Left cardiac atrium (tissue), 4 donors: ENCODE measurements at regions of chr1 and their contacts with region 1.

Region 1: DNA sequence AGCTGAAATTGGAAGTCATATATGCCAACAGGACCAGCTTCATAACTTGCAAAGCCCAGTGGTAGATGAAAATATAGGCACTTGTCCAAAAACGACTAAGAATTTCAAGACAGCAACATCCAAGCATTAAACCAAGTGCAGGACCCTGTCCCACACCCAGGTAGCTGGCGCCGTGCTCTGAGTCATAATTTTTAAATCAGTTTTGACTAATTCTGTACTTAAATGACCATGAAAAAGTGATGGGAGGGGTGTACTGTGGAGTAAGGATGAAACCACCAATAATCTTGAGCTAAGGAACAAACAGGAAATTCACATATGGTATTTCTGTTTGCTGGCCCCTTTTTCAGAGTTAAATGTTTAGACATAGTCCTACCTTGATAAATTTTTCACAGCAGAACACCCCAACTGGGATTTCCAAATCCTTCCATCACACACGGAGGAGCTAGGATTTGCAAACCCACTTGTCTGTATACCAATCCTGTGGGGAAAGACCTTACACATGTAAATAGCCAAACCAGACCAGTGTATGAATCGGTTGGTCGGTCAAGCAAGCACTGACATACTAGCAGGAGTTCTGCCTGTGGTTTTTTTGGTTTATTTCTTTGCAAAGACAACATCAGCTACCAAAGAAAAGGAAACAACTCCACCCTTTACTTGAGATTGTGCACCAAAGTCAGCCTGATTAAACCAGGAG is 235.7 kb upstream of the RAB4A start:
- DNase-seq: no peak
- ATAC-seq: no peak

Region 2: GRCh38 chr1:229148041-229148671 is 113.0 kb after region 1 on chr1:
- intact Hi-C with region 1: loop called in 1 of 2 experiments (anchors 10 kb)
- DNase-seq: peak; percentile 55
- ATAC-seq: peak; percentile 83 to 90

Region 3: GRCh38 chr1:229158341-229158921 is 123.2 kb after region 1 on chr1:
- intact Hi-C with region 1: no loop called
- DNase-seq: peak; percentile 36
- ATAC-seq: peak; percentile 40 to 77